ENCODE measurements at regions of chr14 and their contacts with region 1.

Region 1: GRCh38 chr14:45651890-45652289 is 398.9 kb upstream of the MIS18BP1 start:
- DNase-seq: no peak
- H3K4me3 ChIP-seq: no peak overlapping the region
- H3K27ac ChIP-seq: no peak overlapping the region
- H3K4me1 ChIP-seq: no peaks in the 10 kb centered on the region
- H3K27me3 ChIP-seq: no peaks in the 10 kb centered on the region
- CTCF ChIP-seq: no peak
- EP300 ChIP-seq: no peak
- POLR2A ChIP-seq: no peak
- RAD21 ChIP-seq: no peak

Region 2: DNA sequence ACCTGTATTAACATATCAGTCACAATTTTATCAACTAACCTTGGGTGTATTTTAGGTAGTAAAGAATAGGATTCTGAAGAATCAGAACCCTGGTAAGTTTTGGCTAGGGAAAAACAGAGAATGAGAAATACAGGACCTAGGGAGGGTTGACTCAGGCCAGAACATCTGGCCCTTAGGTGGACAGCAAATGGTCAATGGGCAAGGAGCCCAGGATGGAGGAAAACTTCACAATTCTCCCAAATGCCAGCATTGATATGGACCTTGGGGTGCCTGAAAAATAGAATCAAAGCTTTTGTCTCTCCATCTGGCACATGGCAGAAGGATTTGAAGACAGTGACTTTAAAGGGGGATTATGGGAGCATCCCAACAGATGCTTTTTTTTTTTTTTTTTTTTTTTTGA is 600.7 kb before region 1 on chr14:
- CTCF ChIA-PET with region 1: no interaction called
- POLR2A ChIA-PET with region 1: no interaction called
- DNase-seq: no peak
- H3K4me3 ChIP-seq: no peak overlapping the region
- H3K27ac ChIP-seq: no peak overlapping the region
- H3K4me1 ChIP-seq: no peaks in the 10 kb centered on the region
- H3K27me3 ChIP-seq: no peaks in the 10 kb centered on the region
- CTCF ChIP-seq: no peak
- EP300 ChIP-seq: no peak
- POLR2A ChIP-seq: no peak
- RAD21 ChIP-seq: no peak

Region 3: GRCh38 chr14:45610318-45610717 is 41.6 kb before region 1 on chr14:
- CTCF ChIA-PET with region 1: no interaction called
- POLR2A ChIA-PET with region 1: no interaction called
- DNase-seq: no peak
- H3K4me3 ChIP-seq: no peak overlapping the region
- H3K27ac ChIP-seq: no peak overlapping the region
- H3K4me1 ChIP-seq: no peaks in the 10 kb centered on the region
- H3K27me3 ChIP-seq: no peaks in the 10 kb centered on the region
- CTCF ChIP-seq: peak in 1 of 3 experiments; percentile 21; a peak in 1 of 4 replicates
- EP300 ChIP-seq: no peak
- POLR2A ChIP-seq: no peak
- RAD21 ChIP-seq: peak; percentile 46 to 52; a peak in 3 of 4 replicates

Region 4: DNA sequence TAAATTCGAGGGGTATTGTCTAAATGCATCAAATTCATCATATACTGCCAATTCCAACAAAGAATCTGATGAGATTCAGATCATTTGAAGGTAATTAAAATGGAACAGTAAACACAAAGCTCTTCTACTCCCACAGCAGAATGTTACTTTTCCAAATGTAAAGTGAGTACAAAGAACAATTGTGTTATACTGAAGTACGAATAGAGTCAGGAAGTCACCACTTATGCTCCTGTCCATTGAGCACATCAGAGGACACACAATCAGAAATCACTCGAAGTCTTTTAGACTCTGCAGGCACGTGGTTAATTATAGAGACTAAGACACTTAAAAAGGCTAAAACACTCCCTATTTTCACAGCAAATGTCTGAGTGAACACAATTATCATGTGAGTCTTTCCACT is 10.3 kb before region 1 on chr14:
- CTCF ChIA-PET with region 1: interaction called, 13 read pairs
- POLR2A ChIA-PET with region 1: no interaction called
- DNase-seq: no peak
- H3K4me3 ChIP-seq: no peak overlapping the region
- H3K27ac ChIP-seq: no peak overlapping the region
- H3K4me1 ChIP-seq: no peaks in the 10 kb centered on the region
- H3K27me3 ChIP-seq: no peaks in the 10 kb centered on the region
- CTCF ChIP-seq: no peak
- EP300 ChIP-seq: no peak
- POLR2A ChIP-seq: no peak
- RAD21 ChIP-seq: no peak

Region 5: DNA sequence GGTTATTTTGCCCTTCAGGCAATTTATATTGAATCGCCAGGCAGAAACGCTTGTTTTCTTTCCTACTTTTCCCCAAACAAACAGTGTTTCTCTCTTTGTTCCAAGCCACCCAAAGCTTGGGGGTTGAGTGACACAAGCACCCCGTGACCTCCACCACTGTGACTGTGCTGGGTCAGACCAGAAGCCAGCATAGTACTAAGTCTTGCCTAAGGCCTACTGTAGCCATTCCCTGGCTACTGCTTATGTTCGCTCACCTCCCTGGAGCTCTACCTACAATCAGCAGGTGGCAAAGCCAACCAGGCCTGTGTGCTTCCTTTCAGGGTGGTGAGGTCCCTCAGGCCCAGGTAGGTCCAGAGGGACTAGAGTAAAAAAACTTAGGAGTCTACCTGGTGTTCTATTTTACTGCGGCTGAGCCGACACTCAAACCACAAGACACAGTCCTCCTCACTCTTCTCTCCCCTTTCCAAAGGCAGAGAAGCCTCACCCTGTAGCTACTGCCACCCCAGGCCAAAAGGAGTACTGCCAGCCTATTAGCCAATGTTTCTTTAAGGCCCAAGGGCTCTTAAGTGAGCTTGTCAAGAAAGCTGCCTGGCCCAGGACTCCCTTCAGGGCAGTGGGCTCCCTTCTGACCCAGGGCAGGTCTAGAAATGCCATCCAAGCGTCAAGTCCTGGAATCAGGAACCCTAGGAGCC is 12.9 kb after region 1 on chr14:
- CTCF ChIA-PET with region 1: interaction called, 64 read pairs
- POLR2A ChIA-PET with region 1: interaction called, 3 read pairs
- DNase-seq: peak; percentile 25 to 70
- H3K4me3 ChIP-seq: no peak overlapping the region
- H3K27ac ChIP-seq: no peak overlapping the region
- H3K4me1 ChIP-seq: no peaks in the 10 kb centered on the region
- H3K27me3 ChIP-seq: no peaks in the 10 kb centered on the region
- CTCF ChIP-seq: peak; percentile 37 to 76 (median 39)
- EP300 ChIP-seq: no peak
- POLR2A ChIP-seq: no peak
- RAD21 ChIP-seq: peak; percentile 46 to 62